Right lobe of liver (tissue), 6 donors: ENCODE measurements at regions of chr11 and their contacts with region 1.

Region 1: DNA sequence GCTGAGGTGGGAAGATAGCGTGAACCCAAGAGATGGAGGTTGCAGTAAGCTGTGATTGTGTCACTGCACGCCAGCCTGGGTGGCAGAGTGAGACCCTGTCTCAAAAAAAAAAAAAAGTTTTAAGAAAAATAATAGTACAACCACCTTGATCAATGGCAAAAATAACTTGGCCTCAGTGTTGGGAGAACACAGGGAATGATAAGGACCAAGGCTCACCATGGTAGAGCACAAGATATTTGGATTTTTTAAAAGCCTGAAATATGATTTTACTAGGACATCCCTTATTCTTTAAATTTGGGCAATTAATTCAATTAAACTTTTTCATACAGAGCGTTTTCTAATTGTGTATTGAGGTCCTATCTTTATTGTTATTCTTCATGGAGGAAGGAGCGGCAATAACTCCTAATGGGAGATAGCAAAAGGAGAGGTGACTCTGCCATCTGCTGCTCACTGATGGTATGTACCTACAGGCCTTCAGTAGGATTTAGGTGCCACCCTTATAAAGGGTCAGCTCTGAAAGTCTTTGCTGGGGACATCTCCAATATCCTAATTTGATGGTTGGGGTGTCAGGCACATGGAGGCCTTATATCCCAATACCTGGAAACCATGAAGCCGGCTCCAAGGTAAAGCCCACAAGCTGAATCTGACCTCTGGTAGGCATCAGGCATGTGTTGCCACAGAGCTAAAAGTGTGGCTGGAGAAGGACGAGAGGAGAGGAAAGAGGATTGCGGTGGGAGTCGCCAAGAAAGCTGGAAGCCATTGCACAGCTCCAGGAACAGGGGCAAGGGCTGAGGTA is 21.9 kb upstream of the POLD3 start:
- DNase-seq: peak in 1 of 3 donors; percentile 55
- ATAC-seq: peak; percentile 81 to 94 (median 87)
- H3K4me3 ChIP-seq: no peak overlapping the region
- H3K27ac ChIP-seq: no peak overlapping the region
- H3K4me1 ChIP-seq: peaks cover 0 to 27% (median 0%) of the 10 kb centered on the region in 4 donors
- H3K27me3 ChIP-seq: no peaks in the 10 kb centered on the region
- CTCF ChIP-seq: peak; percentile 73 to 86 (median 76)
- POLR2A ChIP-seq: no peak

Region 2: GRCh38 chr11:74255741-74256369 is 314.6 kb before region 1 on chr11:
- intact Hi-C with region 1: loop called (anchors 10 kb)
- DNase-seq: peak in 1 of 3 donors; percentile 52
- ATAC-seq: peak; percentile 76 to 89 (median 84)
- H3K4me3 ChIP-seq: no peak overlapping the region
- H3K27ac ChIP-seq: no peak overlapping the region
- H3K4me1 ChIP-seq: no peaks in the 10 kb centered on the region
- H3K27me3 ChIP-seq: no peaks in the 10 kb centered on the region
- CTCF ChIP-seq: peak; percentile 77 to 94 (median 93)
- POLR2A ChIP-seq: no peak

Region 3: DNA sequence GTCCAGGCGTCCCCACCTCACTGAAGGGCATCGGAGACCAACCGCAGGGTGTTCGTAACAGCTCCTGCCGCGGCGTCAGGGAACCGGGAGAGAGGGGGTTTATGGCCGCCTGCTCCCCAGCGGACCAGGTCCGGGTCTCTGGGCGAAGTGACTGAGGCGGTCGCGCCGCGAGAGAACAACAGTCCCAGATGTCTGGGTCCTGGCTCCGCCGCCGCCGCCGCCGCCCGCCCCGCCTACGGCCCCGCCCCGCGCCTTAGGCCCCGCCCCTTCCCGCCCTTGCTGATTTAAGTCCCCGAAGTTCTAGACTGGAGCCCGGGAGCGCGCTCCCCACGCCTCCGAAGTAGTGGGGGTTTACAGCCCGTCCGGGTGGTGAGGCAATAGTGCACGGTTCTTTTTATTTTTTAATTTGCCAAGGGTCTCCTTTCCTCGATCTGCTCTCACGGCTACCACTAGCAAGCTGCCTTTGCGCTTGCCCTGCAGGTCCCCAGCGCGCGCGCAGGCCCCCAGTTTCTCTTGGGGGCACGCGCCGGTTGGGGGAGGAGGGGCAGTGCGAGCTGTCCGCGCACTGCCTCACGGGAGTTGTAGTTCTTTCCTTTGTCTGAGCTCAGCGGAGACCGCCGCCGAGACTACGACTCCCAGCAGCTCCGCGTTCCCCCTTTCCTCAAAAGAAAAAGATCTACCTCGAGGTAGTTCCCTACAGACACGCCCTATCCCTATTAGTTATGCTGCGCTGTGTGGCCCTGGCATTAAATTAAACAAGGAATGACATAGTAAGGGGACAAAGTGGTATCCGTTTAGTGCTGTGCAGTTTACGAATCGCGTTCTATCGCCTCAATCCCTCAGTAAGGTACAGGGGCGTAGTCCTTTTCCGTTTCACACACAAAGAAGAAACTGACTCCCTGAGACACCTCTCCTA is 172.0 kb before region 1 on chr11 and contains the start of gene PGM2L1:
- intact Hi-C with region 1: no loop called
- DNase-seq: peak; percentile 94
- ATAC-seq: peak; percentile 97 to 99 (median 98)
- H3K4me3 ChIP-seq: peak within 1 kb of the TSS; percentile 84 to 89 (median 87)
- H3K27ac ChIP-seq: peak within 1 kb of the TSS; percentile 73 to 82 (median 78)
- H3K4me1 ChIP-seq: no peaks in the 10 kb centered on the region
- H3K27me3 ChIP-seq: no peaks in the 10 kb centered on the region
- CTCF ChIP-seq: no peak
- POLR2A ChIP-seq: peak; percentile 47
- total RNA-seq, gene PGM2L1: 0.92 to 2.0 (median 1.2) TPM

Region 4: DNA sequence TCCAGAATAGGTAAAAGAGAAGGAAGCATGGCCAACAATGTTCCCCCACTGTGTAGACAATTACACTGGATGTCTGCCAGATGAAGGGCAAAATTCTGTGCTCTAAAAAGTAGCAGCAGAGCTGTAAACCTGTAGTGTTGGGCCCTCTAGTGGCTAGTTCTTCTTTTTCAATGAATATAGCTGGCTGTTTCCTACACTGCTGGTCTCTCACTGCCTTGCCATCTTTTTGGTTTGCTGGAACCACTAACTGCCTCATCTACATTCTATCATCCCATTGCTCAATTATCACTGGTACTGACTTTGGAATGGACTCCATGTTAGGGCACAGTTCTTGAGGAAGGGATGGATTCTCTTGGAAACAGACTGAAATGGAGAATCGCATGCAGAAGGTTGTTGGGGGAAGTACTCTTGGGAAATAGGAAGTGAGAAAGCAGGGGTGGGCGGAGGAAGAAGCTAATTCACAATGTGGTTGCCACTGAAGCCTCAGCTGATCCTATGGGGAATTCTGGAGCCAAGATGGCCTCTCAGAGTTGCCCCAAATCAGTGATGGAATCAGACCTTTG is 121.0 kb before region 1 on chr11:
- intact Hi-C with region 1: loop called in 1 of 2 experiments (anchors 5 kb)
- DNase-seq: peak in 1 of 3 donors; percentile 63
- ATAC-seq: peak; percentile 90 to 95 (median 92)
- H3K4me3 ChIP-seq: no peak overlapping the region
- H3K27ac ChIP-seq: no peak overlapping the region
- H3K4me1 ChIP-seq: no peaks in the 10 kb centered on the region
- H3K27me3 ChIP-seq: no peaks in the 10 kb centered on the region
- CTCF ChIP-seq: peak; percentile 68 to 93 (median 72)
- POLR2A ChIP-seq: no peak

Region 5: DNA sequence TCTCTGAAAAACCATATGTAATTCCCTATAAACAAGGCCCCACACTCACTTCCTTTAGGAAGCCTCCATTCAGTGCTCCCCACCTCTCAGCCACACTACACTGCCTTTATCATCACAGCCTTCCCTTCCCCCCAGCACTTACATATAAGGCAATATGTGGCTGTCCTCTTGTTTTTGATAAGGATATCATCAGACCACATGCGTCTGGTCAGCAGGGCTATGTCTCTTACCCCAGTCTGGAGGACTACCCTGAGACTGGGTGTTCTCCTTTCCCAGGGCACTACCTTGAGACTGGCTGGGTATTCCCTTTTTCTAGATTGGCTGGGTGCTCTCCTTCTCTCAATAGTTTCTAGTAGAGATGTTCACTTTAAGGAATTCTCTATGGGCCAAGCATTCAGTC is 110.9 kb before region 1 on chr11:
- intact Hi-C with region 1: loop called (anchors 5 kb)
- DNase-seq: no peak
- ATAC-seq: no peak
- H3K4me3 ChIP-seq: no peak overlapping the region
- H3K27ac ChIP-seq: no peak overlapping the region
- H3K4me1 ChIP-seq: peaks cover 0 to 18% (median 6%) of the 10 kb centered on the region in 4 donors
- H3K27me3 ChIP-seq: no peaks in the 10 kb centered on the region
- CTCF ChIP-seq: no peak
- POLR2A ChIP-seq: no peak